Left ventricle myocardium inferior (tissue), 1 donor: ENCODE measurements at regions of chr1 and their contacts with region 1.

Region 1: GRCh38 chr1:161486806-161487741 is 18.2 kb upstream of the FCGR2A start:
- DNase-seq: peak; percentile 38
- H3K4me3 ChIP-seq: peak overlapping the region; percentile 32
- H3K27ac ChIP-seq: no peak overlapping the region
- H3K4me1 ChIP-seq: peaks cover 8% of the 10 kb centered on the region
- H3K27me3 ChIP-seq: peaks cover 70% of the 10 kb centered on the region
- CTCF ChIP-seq: peak; percentile 75

Region 2: GRCh38 chr1:161749509-161750407 is 262.7 kb after region 1 on chr1 and contains the start of gene DUSP12:
- intact Hi-C with region 1: loop called (anchors 10 kb)
- DNase-seq: peak; percentile 95
- H3K4me3 ChIP-seq: peak within 1 kb of the TSS; percentile 91
- H3K27ac ChIP-seq: peak within 1 kb of the TSS; percentile 95
- H3K4me1 ChIP-seq: peaks cover 28% of the 10 kb centered on the region
- H3K27me3 ChIP-seq: peaks cover 6% of the 10 kb centered on the region
- CTCF ChIP-seq: no peak
- total RNA-seq, gene DUSP12: 8.4 TPM